ENCODE measurements at regions of chr6 and their contacts with region 1.

Region 1: GRCh38 chr6:15691250-15691869 is 28.5 kb upstream of the DTNBP1 start:
- DNase-seq: peak; percentile 60 to 92 (median 72)
- ATAC-seq: peak; percentile 100
- H3K4me3 ChIP-seq: no peak overlapping the region
- H3K4me3 Mint-ChIP-seq: no peak overlapping the region
- H3K27ac ChIP-seq: no peak overlapping the region
- H3K27ac Mint-ChIP-seq: no peak overlapping the region
- H3K4me1 ChIP-seq: peaks cover 3% of the 10 kb centered on the region
- H3K4me1 Mint-ChIP-seq: peaks cover 6% of the 10 kb centered on the region
- H3K27me3 ChIP-seq: no peaks in the 10 kb centered on the region
- H3K27me3 Mint-ChIP-seq: peaks cover 7% of the 10 kb centered on the region
- CTCF ChIP-seq: peak; percentile 100

Region 2: DNA sequence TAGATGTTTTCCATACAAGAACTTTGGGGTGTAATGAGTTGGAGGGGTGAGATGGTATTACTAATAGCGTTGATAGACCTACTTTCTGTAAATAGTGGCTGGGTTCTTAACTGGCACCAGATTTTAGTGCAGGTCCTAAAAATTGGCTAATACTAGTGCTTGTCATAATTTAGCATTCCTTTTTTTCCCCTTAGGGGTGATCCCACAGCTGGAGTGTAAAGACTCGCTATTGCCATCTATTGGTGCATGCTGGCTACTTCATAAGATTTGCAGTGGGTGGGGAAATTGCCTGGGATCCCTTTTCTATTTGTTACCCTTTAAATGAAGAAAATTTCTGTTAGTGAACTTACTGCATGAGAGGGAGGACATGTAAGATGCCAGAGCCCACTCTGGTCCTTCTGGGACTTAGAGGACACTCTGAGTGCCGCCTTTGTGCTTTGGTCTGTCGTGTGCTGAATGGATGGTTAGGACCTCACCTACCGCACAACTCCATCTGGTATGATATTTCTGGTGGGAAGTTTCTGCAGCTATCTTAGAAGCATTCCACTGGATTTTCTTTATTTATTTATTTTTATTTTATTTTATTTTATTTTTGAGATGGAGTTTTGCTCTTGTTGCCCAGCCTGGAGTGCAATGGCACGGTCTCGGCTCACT is 250.0 kb before region 1 on chr6:
- CTCF ChIA-PET with region 1: no interaction called
- POLR2A ChIA-PET with region 1: no interaction called
- intact Hi-C with region 1: no loop called
- DNase-seq: peak in 11 of 14 experiments; percentile 7 to 73 (median 16)
- ATAC-seq: peak; percentile 69
- H3K4me3 ChIP-seq: no peak overlapping the region
- H3K4me3 Mint-ChIP-seq: no peak overlapping the region
- H3K27ac ChIP-seq: no peak overlapping the region
- H3K27ac Mint-ChIP-seq: no peak overlapping the region
- H3K4me1 ChIP-seq: peaks cover 21% of the 10 kb centered on the region
- H3K4me1 Mint-ChIP-seq: peaks cover 89% of the 10 kb centered on the region
- H3K27me3 ChIP-seq: no peaks in the 10 kb centered on the region
- H3K27me3 Mint-ChIP-seq: no peaks in the 10 kb centered on the region
- CTCF ChIP-seq: peak; percentile 86

Region 3: GRCh38 chr6:16183187-16183664 is 491.9 kb after region 1 on chr6:
- CTCF ChIA-PET with region 1: interaction called, 14 read pairs
- POLR2A ChIA-PET with region 1: interaction called, 8 read pairs
- intact Hi-C with region 1: loop called (anchors 1 kb)
- DNase-seq: peak in 3 of 14 experiments; percentile 48 to 63 (median 60)
- ATAC-seq: peak; percentile 24
- H3K4me3 ChIP-seq: no peak overlapping the region
- H3K4me3 Mint-ChIP-seq: no peak overlapping the region
- H3K27ac ChIP-seq: no peak overlapping the region
- H3K27ac Mint-ChIP-seq: peak overlapping the region; percentile 37
- H3K4me1 ChIP-seq: peaks cover 30% of the 10 kb centered on the region
- H3K4me1 Mint-ChIP-seq: peaks cover 42% of the 10 kb centered on the region
- H3K27me3 ChIP-seq: no peaks in the 10 kb centered on the region
- H3K27me3 Mint-ChIP-seq: no peaks in the 10 kb centered on the region
- CTCF ChIP-seq: peak; percentile 71

Region 4: DNA sequence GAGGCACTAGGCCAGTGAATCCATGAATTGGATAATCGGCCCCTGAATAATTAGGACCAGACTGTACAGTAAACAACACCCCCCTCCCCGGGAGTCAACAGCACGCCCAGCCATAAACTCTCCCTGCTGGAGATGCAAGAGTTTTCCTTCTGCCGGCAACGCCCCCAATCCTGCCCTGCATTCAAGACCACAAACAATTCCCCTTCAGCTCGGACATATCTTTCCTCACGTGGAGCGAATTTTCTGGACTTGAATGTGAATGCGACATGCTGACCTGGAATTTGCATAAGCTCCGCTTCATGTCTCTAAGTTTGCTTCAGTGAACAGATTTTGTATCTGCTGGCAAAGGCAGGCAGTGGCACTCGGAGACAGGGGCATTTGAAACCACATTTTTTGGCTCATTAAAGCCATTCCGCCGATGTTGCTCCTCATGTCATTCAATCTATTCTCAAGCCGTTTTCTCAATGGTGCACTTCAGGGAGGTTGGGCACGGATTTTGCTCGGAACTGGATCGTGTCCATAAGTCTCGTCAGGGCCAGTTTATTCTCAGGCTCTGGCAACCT is 509.0 kb after region 1 on chr6:
- CTCF ChIA-PET with region 1: interaction called, 20 read pairs
- POLR2A ChIA-PET with region 1: no interaction called
- intact Hi-C with region 1: loop called in 1 of 2 experiments (anchors 1 kb)
- DNase-seq: no peak
- ATAC-seq: no peak
- H3K4me3 ChIP-seq: no peak overlapping the region
- H3K4me3 Mint-ChIP-seq: no peak overlapping the region
- H3K27ac ChIP-seq: no peak overlapping the region
- H3K27ac Mint-ChIP-seq: no peak overlapping the region
- H3K4me1 ChIP-seq: no peaks in the 10 kb centered on the region
- H3K4me1 Mint-ChIP-seq: no peaks in the 10 kb centered on the region
- H3K27me3 ChIP-seq: peaks cover 0 to 2% of the 10 kb centered on the region in 2 experiments
- H3K27me3 Mint-ChIP-seq: peaks cover 6% of the 10 kb centered on the region
- CTCF ChIP-seq: no peak

Region 5: GRCh38 chr6:16206595-16207037 is 515.3 kb after region 1 on chr6:
- CTCF ChIA-PET with region 1: interaction called, 20 read pairs
- POLR2A ChIA-PET with region 1: interaction called, 3 read pairs
- intact Hi-C with region 1: loop called (anchors 1 kb)
- DNase-seq: peak in 11 of 14 experiments; percentile 12 to 70 (median 23)
- ATAC-seq: peak; percentile 61
- H3K4me3 ChIP-seq: no peak overlapping the region
- H3K4me3 Mint-ChIP-seq: no peak overlapping the region
- H3K27ac ChIP-seq: no peak overlapping the region
- H3K27ac Mint-ChIP-seq: no peak overlapping the region
- H3K4me1 ChIP-seq: no peaks in the 10 kb centered on the region
- H3K4me1 Mint-ChIP-seq: no peaks in the 10 kb centered on the region
- H3K27me3 ChIP-seq: peaks cover 0 to 8% of the 10 kb centered on the region in 2 experiments
- H3K27me3 Mint-ChIP-seq: peaks cover 22% of the 10 kb centered on the region
- CTCF ChIP-seq: peak; percentile 95